Naive thymus-derived CD4-positive, alpha-beta T cell (primary cell): ENCODE measurements at regions of chr16 and their contacts with region 1.

Region 1: GRCh38 chr16:234468-235305 is at the start of gene FAM234A:
- DNase-seq: peak; percentile 93 to 98 (median 97)
- ATAC-seq: peak; percentile 90
- H3K4me3 ChIP-seq: peak within 1 kb of the TSS; percentile 82
- H3K4me3 Mint-ChIP-seq: peak within 1 kb of the TSS; percentile 81 to 99 (median 96)
- H3K27ac ChIP-seq: peak within 1 kb of the TSS; percentile 99
- H3K27ac Mint-ChIP-seq: peak within 1 kb of the TSS; percentile 90 to 100 (median 99)
- H3K4me1 ChIP-seq: peaks cover 0 to 5% of the 10 kb centered on the region in 2 donors
- H3K4me1 Mint-ChIP-seq: peaks cover 7 to 25% (median 16%) of the 10 kb centered on the region in 7 donors
- H3K27me3 ChIP-seq: no peaks in the 10 kb centered on the region
- H3K27me3 Mint-ChIP-seq: peaks cover 0 to 3% (median 0%) of the 10 kb centered on the region in 5 donors
- total RNA-seq, gene FAM234A: 30.4 to 43.9 (median 32.9) TPM

Region 2: GRCh38 chr16:9903-10665 is 224.6 kb before region 1 on chr16:
- CTCF ChIA-PET with region 1: no interaction called
- POLR2A ChIA-PET with region 1: no interaction called
- intact Hi-C with region 1: no loop called
- DNase-seq: no peak
- ATAC-seq: peak; percentile 96
- H3K4me3 ChIP-seq: no peak overlapping the region
- H3K4me3 Mint-ChIP-seq: peak overlapping the region in 9 of 10 donors; percentile 30 to 79 (median 64)
- H3K27ac ChIP-seq: no peak overlapping the region
- H3K27ac Mint-ChIP-seq: peak overlapping the region in 3 of 9 donors; percentile 32 to 48 (median 45)
- H3K4me1 ChIP-seq: no peaks in the 10 kb centered on the region
- H3K4me1 Mint-ChIP-seq: no peaks in the 10 kb centered on the region
- H3K27me3 ChIP-seq: no peaks in the 10 kb centered on the region
- H3K27me3 Mint-ChIP-seq: no peaks in the 10 kb centered on the region

Region 3: DNA sequence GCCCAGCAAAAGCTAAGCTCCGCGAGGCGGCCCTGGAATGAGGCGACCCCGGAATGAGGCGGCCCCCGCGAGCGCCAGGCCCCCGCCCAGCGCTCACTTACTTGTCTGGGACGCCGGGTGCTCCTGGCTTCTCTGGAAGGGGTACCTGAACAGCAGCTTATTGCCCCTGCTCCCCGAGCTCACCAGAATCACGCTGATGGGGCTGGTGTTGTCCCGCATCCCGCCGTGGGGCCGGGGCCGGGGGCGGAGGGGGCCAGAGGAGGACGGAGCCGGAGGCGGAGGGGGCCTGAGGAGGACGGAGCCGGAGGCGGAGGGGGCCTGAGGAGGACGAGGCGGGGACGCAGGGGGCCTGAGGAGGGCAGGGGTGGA is 96.7 kb before region 1 on chr16:
- CTCF ChIA-PET with region 1: no interaction called
- POLR2A ChIA-PET with region 1: no interaction called
- intact Hi-C with region 1: loop called (anchors 1 kb)
- DNase-seq: peak in 7 of 9 donors; percentile 10 to 55 (median 23)
- ATAC-seq: peak; percentile 24
- H3K4me3 ChIP-seq: peak overlapping the region; percentile 58
- H3K4me3 Mint-ChIP-seq: peak overlapping the region; percentile 74 to 90 (median 84)
- H3K27ac ChIP-seq: peak overlapping the region; percentile 68
- H3K27ac Mint-ChIP-seq: peak overlapping the region in 7 of 9 donors; percentile 11 to 94 (median 75)
- H3K4me1 ChIP-seq: peaks cover 6% of the 10 kb centered on the region in 2 donors
- H3K4me1 Mint-ChIP-seq: peaks cover 9 to 47% (median 26%) of the 10 kb centered on the region in 7 donors
- H3K27me3 ChIP-seq: no peaks in the 10 kb centered on the region
- H3K27me3 Mint-ChIP-seq: peaks cover 0 to 6% (median 0%) of the 10 kb centered on the region in 5 donors

Region 4: GRCh38 chr16:309476-309875 is 74.8 kb after region 1 on chr16:
- CTCF ChIA-PET with region 1: no interaction called
- POLR2A ChIA-PET with region 1: no interaction called
- intact Hi-C with region 1: loop called in 1 of 2 experiments (anchors 1 kb)
- DNase-seq: peak in 5 of 9 donors; percentile 33 to 52 (median 40)
- ATAC-seq: peak; percentile 60
- H3K4me3 ChIP-seq: no peak overlapping the region
- H3K4me3 Mint-ChIP-seq: peak overlapping the region in 3 of 10 donors; percentile 28 to 57 (median 39)
- H3K27ac ChIP-seq: no peak overlapping the region
- H3K27ac Mint-ChIP-seq: peak overlapping the region in 7 of 9 donors; percentile 25 to 82 (median 69)
- H3K4me1 ChIP-seq: peaks cover 0 to 4% of the 10 kb centered on the region in 2 donors
- H3K4me1 Mint-ChIP-seq: peaks cover 10 to 37% (median 20%) of the 10 kb centered on the region in 7 donors
- H3K27me3 ChIP-seq: no peaks in the 10 kb centered on the region
- H3K27me3 Mint-ChIP-seq: no peaks in the 10 kb centered on the region

Region 5: GRCh38 chr16:425082-425718 is 190.5 kb after region 1 on chr16 and contains the start of gene RAB11FIP3:
- CTCF ChIA-PET with region 1: no interaction called
- POLR2A ChIA-PET with region 1: no interaction called
- intact Hi-C with region 1: loop called in 1 of 2 experiments (anchors 1 kb)
- DNase-seq: peak; percentile 80 to 91 (median 87)
- ATAC-seq: peak; percentile 94
- H3K4me3 ChIP-seq: peak within 1 kb of the TSS; percentile 83
- H3K4me3 Mint-ChIP-seq: peak within 1 kb of the TSS; percentile 78 to 92 (median 88)
- H3K27ac ChIP-seq: peak within 1 kb of the TSS; percentile 92
- H3K27ac Mint-ChIP-seq: peak within 1 kb of the TSS in 8 of 9 donors; percentile 78 to 95 (median 90)
- H3K4me1 ChIP-seq: peaks cover 10 to 17% of the 10 kb centered on the region in 2 donors
- H3K4me1 Mint-ChIP-seq: peaks cover 22 to 39% (median 32%) of the 10 kb centered on the region in 7 donors
- H3K27me3 ChIP-seq: no peaks in the 10 kb centered on the region
- H3K27me3 Mint-ChIP-seq: peaks cover 0 to 18% (median 0%) of the 10 kb centered on the region in 5 donors
- total RNA-seq, gene RAB11FIP3: 37.9 to 53.0 (median 45.5) TPM

Region 6: DNA sequence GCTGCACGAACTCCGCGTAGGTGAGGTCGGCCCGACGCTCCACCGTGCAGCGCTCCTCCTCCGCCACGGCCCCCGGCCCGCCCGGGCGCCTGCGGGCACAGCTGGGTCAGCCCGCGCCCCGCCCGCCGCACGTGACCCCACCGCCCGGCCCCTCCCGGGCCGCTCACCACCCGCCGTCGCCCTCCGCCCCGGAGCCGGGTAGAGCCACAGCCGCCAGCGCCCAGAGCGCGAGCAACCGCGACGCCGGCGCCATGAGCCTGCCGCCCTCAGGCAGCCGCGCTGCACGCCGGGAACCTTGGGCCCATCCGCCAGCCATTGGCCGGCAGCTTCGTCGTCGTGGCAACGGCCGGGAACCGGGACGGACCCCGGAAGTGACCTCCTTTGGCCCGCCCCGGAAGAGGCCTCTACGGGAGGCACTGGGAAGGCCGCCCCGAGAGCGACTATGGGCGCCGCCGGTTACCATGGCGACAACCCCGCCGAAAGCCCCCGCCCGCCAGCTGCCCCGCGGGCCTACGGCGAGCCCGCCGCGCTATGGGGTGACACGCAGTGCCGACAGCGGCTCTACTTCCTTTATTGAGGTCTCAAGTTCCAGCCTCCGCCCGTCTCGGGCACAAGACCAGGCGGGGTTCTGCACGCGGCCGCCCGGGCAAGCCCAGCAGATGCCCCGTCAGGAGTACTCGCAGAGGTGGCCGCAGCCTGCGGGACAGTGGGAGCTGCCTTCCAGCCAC is 449.5 kb after region 1 on chr16 and contains the start of gene JMJD8:
- CTCF ChIA-PET with region 1: no interaction called
- POLR2A ChIA-PET with region 1: no interaction called
- intact Hi-C with region 1: loop called in 1 of 2 experiments (anchors 5 kb)
- DNase-seq: peak; percentile 88 to 97 (median 91)
- ATAC-seq: peak; percentile 75
- H3K4me3 ChIP-seq: peak within 1 kb of the TSS; percentile 52
- H3K4me3 Mint-ChIP-seq: peak within 1 kb of the TSS; percentile 58 to 87 (median 76)
- H3K27ac ChIP-seq: peak within 1 kb of the TSS; percentile 78
- H3K27ac Mint-ChIP-seq: peak within 1 kb of the TSS in 6 of 9 donors; percentile 38 to 82 (median 58)
- H3K4me1 ChIP-seq: peaks cover 9 to 36% of the 10 kb centered on the region in 2 donors
- H3K4me1 Mint-ChIP-seq: peaks cover 10 to 31% (median 22%) of the 10 kb centered on the region in 7 donors
- H3K27me3 ChIP-seq: no peaks in the 10 kb centered on the region
- H3K27me3 Mint-ChIP-seq: no peaks in the 10 kb centered on the region
- total RNA-seq, gene JMJD8: 26.8 to 48.1 (median 37.2) TPM